ENCODE measurements at regions of chr14 and their contacts with region 1.

Region 1: GRCh38 chr14:100297302-100298300 is 8.6 kb downstream of the SLC25A29 start:
- DNase-seq: no peak
- H3K4me3 ChIP-seq: no peak overlapping the region
- H3K27ac ChIP-seq: no peak overlapping the region
- H3K4me1 ChIP-seq: no peaks in the 10 kb centered on the region
- H3K27me3 ChIP-seq: no peaks in the 10 kb centered on the region
- CTCF ChIP-seq: no peak
- EP300 ChIP-seq: no peak
- POLR2A ChIP-seq: no peak
- RAD21 ChIP-seq: no peak

Region 2: DNA sequence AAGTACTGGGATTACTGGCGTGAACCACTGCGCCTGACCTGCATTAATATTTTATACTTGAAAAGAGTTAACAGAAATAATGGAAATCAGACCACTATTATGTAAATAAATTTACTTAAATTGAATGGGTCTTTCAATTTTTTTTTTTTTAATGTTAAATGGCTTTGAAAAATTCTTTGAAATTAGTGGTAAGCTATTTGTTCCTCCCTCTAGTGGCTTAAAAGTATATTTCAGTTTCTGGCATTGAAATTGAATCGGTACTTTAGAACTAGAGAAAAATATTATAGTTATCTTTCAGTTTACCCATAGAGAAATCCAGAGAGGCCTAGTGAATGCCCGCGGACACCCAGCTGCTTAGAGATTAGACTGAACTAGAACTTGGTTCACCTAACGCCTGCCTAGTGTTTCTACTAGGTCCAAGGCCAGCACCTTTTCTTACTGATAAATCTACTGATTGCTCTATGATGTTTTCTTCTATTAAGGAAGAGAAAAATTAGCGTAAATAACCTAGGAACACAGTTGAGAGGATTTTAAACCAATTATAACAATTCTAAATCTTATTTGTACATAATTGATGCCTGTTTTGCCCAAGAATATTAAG is 397.9 kb before region 1 on chr14:
- CTCF ChIA-PET with region 1: no interaction called
- POLR2A ChIA-PET with region 1: no interaction called
- DNase-seq: no peak
- H3K4me3 ChIP-seq: no peak overlapping the region
- H3K27ac ChIP-seq: no peak overlapping the region
- H3K4me1 ChIP-seq: no peaks in the 10 kb centered on the region
- H3K27me3 ChIP-seq: no peaks in the 10 kb centered on the region
- CTCF ChIP-seq: peak in 1 of 3 experiments; percentile 25; a peak in 2 of 4 replicates
- EP300 ChIP-seq: no peak
- POLR2A ChIP-seq: no peak
- RAD21 ChIP-seq: no peak

Region 3: DNA sequence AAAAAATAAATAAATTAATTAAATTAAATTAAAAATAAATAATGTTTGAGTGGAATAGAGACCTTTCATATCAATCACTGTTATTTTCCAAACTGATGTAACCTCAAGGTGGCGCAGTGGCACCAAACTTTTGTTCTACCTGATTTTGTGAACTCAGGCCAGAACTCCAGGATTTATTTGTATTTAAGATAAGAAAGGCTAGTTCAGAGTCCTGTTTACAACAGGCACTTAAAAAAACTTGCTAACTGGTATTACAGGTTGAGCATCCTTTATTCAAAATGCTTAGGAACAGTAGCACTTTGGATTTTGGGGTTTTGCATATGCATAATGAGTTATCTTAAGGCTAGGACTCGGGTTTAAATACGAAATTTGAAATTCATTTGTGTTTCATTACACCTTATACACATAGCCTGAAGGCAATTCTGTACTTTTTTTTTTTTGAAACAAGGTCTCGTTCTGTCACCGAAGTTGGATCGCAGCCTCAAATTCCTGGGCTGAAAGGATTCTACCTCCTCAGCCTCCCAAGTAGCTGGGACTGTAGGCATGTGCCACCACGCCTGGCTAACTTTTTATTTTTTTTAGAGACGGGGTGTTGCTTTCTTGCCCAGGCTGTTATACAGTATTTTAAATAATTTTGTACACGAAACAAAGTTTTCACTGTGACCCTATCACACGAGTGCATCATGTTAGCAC is 26.2 kb before region 1 on chr14:
- CTCF ChIA-PET with region 1: interaction called, 13 read pairs
- POLR2A ChIA-PET with region 1: interaction called, 3 read pairs
- DNase-seq: no peak
- H3K4me3 ChIP-seq: no peak overlapping the region
- H3K27ac ChIP-seq: no peak overlapping the region
- H3K4me1 ChIP-seq: peaks cover 0 to 15% (median 4%) of the 10 kb centered on the region in 4 experiments; a peak in 6 of 7 replicates
- H3K27me3 ChIP-seq: no peaks in the 10 kb centered on the region
- CTCF ChIP-seq: peak in 2 of 3 experiments; percentile 17 to 45; a peak in 2 of 4 replicates
- EP300 ChIP-seq: no peak
- POLR2A ChIP-seq: no peak
- RAD21 ChIP-seq: peak; percentile 24 to 39; a peak in 2 of 4 replicates

Region 4: DNA sequence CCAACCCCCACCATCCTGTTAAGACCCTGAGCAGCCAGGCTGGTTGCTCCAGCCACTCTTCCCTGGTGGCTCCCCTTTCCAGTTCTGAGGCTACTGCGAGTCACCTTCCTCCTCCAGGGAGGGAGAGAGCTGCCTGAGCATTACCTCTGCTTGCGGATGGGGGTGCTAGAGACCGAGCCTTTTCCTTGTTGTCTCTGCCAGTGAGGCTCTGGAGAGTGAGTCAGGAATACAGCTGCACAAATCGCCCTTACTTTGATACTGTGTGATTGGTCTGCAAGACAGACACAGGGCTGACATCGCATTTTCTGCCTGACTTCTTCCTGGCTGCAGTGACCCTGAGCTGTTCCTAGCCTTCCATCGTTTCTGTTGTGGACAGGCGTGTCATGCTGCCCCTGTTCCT is 119.9 kb after region 1 on chr14:
- CTCF ChIA-PET with region 1: no interaction called
- POLR2A ChIA-PET with region 1: no interaction called
- DNase-seq: peak; percentile 58 to 78
- H3K4me3 ChIP-seq: no peak overlapping the region
- H3K27ac ChIP-seq: no peak overlapping the region
- H3K4me1 ChIP-seq: peaks cover 0 to 9% (median 3%) of the 10 kb centered on the region in 4 experiments; a peak in 5 of 7 replicates
- H3K27me3 ChIP-seq: no peaks in the 10 kb centered on the region
- CTCF ChIP-seq: peak; percentile 83 to 98 (median 84)
- EP300 ChIP-seq: no peak
- POLR2A ChIP-seq: no peak
- RAD21 ChIP-seq: peak; percentile 90 to 92

Measured in H1 (cell line).